PC-3 (cell line): ENCODE measurements at regions of chr2 and their contacts with region 1.

Region 1: DNA sequence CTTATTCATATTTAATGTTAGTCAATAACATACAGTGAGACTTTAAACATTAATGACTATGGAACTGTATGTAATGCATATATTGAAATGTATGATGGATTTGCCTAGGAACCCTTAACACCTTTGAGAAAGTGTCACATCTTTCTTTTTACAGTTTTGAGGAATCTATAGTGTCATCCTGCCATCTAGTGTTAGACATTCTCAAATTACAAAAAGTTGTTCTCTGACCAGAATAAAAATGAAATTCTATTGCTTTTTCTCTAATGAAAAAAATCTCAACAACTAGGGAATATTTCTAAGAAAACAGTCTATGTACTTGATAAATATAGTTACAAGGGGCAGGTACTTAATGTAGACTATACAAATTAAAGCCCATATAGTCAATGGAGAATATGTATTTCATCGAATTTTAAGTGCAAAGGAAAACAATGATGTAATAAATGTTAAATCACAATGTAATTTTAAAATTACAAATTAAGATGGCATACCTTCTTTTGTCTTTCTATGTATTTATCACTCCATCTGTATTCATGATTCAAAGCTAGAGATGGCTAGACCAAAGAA is 5.1 kb upstream of the CALCRL start:
- DNase-seq: peak; percentile 50
- ATAC-seq: no peak
- H3K4me3 ChIP-seq: no peak overlapping the region
- H3K27ac ChIP-seq: no peak overlapping the region
- H3K4me1 ChIP-seq: no peaks in the 10 kb centered on the region
- H3K27me3 ChIP-seq: no peaks in the 10 kb centered on the region
- CTCF ChIP-seq: peak; percentile 72

Region 2: GRCh38 chr2:186862869-186863709 is 590.1 kb before region 1 on chr2:
- CTCF ChIA-PET with region 1: interaction called, 4 read pairs
- POLR2A ChIA-PET with region 1: no interaction called
- intact Hi-C with region 1: loop called (anchors 1 kb)
- DNase-seq: peak; percentile 71
- ATAC-seq: peak; percentile 78
- H3K4me3 ChIP-seq: no peak overlapping the region
- H3K27ac ChIP-seq: no peak overlapping the region
- H3K4me1 ChIP-seq: no peaks in the 10 kb centered on the region
- H3K27me3 ChIP-seq: peaks cover 3% of the 10 kb centered on the region; the same call in 1 of the 2 replicates
- CTCF ChIP-seq: peak; percentile 89

Region 3: GRCh38 chr2:186903216-186903615 is 549.9 kb before region 1 on chr2:
- CTCF ChIA-PET with region 1: no interaction called
- POLR2A ChIA-PET with region 1: no interaction called
- intact Hi-C with region 1: loop called (anchors 1 kb)
- DNase-seq: peak; percentile 38
- ATAC-seq: no peak
- H3K4me3 ChIP-seq: no peak overlapping the region
- H3K27ac ChIP-seq: no peak overlapping the region
- H3K4me1 ChIP-seq: no peaks in the 10 kb centered on the region
- H3K27me3 ChIP-seq: no peaks in the 10 kb centered on the region
- CTCF ChIP-seq: peak; percentile 75

Region 4: DNA sequence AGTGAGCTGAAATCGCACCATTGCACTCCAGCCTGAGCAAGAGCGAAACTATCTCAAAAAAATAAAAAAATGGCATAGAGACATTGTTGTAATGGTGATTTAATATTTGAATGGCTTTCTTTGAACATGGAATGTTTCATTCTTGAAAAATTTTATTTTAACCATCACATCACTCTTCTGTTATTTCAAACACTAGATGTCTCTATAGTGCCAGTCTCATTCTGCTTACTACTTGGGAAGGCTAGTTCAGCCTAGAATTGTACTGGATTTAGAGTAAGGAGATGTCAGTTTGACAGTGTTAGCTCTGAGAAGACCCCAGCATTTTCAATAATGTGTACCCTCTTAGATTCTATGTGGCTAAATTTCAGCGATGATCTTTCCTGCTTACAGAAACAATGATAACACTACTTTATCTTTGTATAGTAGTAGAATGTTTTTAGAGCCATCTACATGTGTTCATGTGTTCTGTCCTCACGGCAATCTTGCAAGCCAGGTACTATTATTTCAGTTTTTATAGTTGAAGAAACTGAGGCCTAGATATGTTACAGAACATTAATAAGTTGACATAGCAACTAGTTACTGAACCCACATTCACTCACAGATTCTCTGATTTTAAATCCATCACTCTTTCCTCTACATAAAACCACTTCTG is 461.3 kb before region 1 on chr2:
- CTCF ChIA-PET with region 1: no interaction called
- POLR2A ChIA-PET with region 1: no interaction called
- intact Hi-C with region 1: loop called (anchors 5 kb)
- DNase-seq: peak; percentile 13
- ATAC-seq: no peak
- H3K4me3 ChIP-seq: no peak overlapping the region
- H3K27ac ChIP-seq: no peak overlapping the region
- H3K4me1 ChIP-seq: peaks cover 5% of the 10 kb centered on the region; the same call in 1 of the 2 replicates
- H3K27me3 ChIP-seq: no peaks in the 10 kb centered on the region
- CTCF ChIP-seq: peak; percentile 43

Region 5: DNA sequence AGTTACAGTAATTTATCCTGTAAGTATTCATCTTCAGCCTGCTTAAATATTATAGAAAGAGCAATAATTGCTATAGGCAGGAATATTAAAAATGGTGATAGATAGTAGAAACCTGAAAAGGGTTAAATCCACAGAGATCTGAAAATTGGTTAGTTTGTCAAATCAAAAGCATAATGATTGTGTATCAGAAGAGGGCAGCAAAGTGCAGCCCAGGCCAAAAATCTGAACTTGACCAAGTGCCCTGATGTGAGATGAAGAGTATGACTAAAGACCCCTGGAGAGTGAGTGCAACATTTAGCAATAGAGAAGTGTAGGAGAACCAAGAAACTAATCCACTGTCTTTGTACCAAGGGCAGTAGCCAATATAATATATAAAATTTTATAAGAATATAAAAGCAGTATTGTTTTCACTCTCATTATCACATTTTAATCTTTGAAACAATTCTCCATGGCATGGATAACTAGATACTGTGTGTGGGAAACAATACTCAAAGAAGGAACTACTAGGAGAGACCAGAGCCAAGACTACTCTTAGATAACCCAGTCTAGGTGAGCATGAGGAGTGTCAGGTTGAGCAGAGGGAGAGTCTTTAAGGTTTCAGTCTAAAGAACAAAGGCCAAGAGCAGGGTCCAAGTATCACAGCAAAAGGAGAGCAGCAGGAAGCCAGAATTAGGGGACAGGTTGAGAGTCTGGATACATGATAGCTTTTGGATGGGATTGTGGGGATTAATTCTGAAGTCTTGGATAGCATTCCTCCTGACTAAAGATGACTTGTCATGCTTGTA is 153.8 kb before region 1 on chr2:
- CTCF ChIA-PET with region 1: no interaction called
- POLR2A ChIA-PET with region 1: no interaction called
- intact Hi-C with region 1: loop called (anchors 2 kb)
- DNase-seq: peak; percentile 27
- ATAC-seq: peak; percentile 27; the same call in 1 of the 2 replicates
- H3K4me3 ChIP-seq: no peak overlapping the region
- H3K27ac ChIP-seq: no peak overlapping the region
- H3K4me1 ChIP-seq: no peaks in the 10 kb centered on the region
- H3K27me3 ChIP-seq: no peaks in the 10 kb centered on the region
- CTCF ChIP-seq: peak; percentile 59